Activated naive CD8-positive, alpha-beta T cell treated with anti-CD3 and anti-CD28 coated beads, Interleukin-2, amount 10 ng/mL, durations not matched to agents 7 days and 5 days (primary cell): ENCODE measurements at regions of chr19 and their contacts with region 1.

Region 1: DNA sequence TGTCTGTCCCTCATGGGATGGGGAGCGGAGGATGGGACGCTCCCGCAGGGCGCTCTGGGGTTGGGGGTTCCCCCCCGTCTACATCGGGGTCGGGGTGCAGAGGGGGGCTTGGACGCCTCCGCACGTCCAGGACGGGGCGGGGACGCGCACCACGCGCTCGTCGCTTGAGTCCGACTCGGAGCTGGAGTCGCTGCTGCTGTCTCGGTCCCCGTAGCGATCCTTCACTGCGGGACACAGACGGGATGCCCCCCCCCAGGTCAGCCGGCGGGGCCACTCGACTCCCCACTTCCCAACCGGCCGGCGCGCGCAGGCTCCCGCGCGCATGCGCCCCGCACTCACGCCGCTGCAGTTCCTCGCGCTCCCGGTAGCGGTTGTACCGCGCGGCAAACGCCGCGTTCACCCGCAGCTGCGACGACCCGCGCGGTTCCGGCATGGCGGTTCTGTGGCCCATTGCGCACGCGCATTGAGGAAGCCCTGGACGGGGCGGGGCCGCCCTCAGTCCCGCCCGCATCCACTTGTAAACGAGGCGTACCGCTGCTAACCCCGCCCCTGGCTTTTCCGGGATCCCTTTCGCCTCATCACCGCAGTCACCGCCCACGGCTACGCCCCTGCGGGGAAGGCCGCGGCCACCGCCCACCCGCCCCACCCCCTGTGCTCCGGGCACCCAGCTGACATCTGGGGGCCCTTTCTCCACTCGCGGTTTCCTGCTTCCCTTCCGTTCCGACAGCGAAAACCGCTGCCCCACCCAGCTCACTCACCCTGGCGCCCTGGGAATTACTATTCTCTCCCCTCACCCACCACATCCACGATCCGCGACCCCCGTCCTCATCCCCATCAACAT is at the start of gene KRI1:
- DNase-seq: peak; percentile 100
- ATAC-seq: peak; percentile 32
- H3K4me3 Mint-ChIP-seq: peak within 1 kb of the TSS; percentile 99
- H3K27ac Mint-ChIP-seq: peak within 1 kb of the TSS; percentile 98
- H3K4me1 Mint-ChIP-seq: peaks cover 33% of the 10 kb centered on the region
- H3K27me3 Mint-ChIP-seq: no peaks in the 10 kb centered on the region
- total RNA-seq, gene KRI1: 76.2 to 85.4 TPM

Region 2: GRCh38 chr19:10403137-10404021 is 162.4 kb before region 1 on chr19 and contains the start of gene CDC37:
- POLR2A ChIA-PET with region 1: interaction called, 11 read pairs
- DNase-seq: peak; percentile 99
- ATAC-seq: peak; percentile 68
- H3K4me3 Mint-ChIP-seq: peak within 1 kb of the TSS; percentile 88
- H3K27ac Mint-ChIP-seq: peak within 1 kb of the TSS; percentile 91
- H3K4me1 Mint-ChIP-seq: peaks cover 52% of the 10 kb centered on the region
- H3K27me3 Mint-ChIP-seq: no peaks in the 10 kb centered on the region
- total RNA-seq, gene CDC37: 242 to 248 TPM

Region 3: GRCh38 chr19:10439588-10439987 is 126.2 kb before region 1 on chr19:
- POLR2A ChIA-PET with region 1: no interaction called
- DNase-seq: no peak
- ATAC-seq: no peak
- H3K4me3 Mint-ChIP-seq: no peak overlapping the region
- H3K27ac Mint-ChIP-seq: no peak overlapping the region
- H3K4me1 Mint-ChIP-seq: peaks cover 14% of the 10 kb centered on the region
- H3K27me3 Mint-ChIP-seq: no peaks in the 10 kb centered on the region

Region 4: GRCh38 chr19:10543420-10544241 is 22.2 kb before region 1 on chr19 and contains the start of gene ATG4D:
- POLR2A ChIA-PET with region 1: interaction called, 49 read pairs
- DNase-seq: peak; percentile 89
- ATAC-seq: peak; percentile 80
- H3K4me3 Mint-ChIP-seq: peak within 1 kb of the TSS; percentile 92
- H3K27ac Mint-ChIP-seq: peak within 1 kb of the TSS; percentile 89
- H3K4me1 Mint-ChIP-seq: peaks cover 12% of the 10 kb centered on the region
- H3K27me3 Mint-ChIP-seq: peaks cover 22% of the 10 kb centered on the region
- total RNA-seq, gene ATG4D: 50.4 to 66.6 TPM

Region 5: DNA sequence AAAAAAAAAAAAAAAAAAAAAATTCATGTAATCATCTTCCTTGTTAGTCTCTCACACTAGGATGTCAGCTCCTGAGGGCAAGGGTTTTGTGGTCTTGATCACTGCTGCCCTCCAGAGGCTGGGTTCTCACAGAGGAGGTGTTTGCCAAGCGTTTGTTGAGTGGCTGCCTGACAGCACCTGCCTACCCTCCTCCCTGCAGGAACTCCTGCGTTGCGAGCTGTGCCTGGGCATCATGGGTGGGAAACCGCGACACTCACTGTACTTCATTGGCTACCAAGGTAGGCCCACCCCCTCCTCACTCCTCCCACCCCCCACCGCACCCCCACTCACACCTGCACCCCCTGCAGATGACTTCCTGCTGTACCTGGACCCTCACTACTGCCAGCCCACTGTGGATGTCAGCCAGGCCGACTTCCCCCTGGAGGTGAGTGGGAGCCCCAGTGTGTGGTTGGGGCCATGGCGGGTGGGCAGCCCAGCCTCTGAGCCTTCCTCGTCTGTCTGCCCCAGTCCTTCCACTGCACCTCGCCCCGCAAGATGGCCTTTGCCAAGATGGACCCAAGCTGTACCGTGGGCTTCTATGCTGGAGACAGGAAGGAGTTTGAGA is 14.0 kb before region 1 on chr19:
- POLR2A ChIA-PET with region 1: interaction called, 224 read pairs
- DNase-seq: no peak
- ATAC-seq: no peak
- H3K4me3 Mint-ChIP-seq: peak overlapping the region; percentile 47
- H3K27ac Mint-ChIP-seq: peak overlapping the region; percentile 92
- H3K4me1 Mint-ChIP-seq: peaks cover 44% of the 10 kb centered on the region
- H3K27me3 Mint-ChIP-seq: no peaks in the 10 kb centered on the region

Region 6: GRCh38 chr19:10602330-10603083 is 36.7 kb after region 1 on chr19:
- POLR2A ChIA-PET with region 1: interaction called, 15 read pairs
- DNase-seq: peak; percentile 94
- ATAC-seq: peak; percentile 69
- H3K4me3 Mint-ChIP-seq: peak overlapping the region; percentile 99
- H3K27ac Mint-ChIP-seq: peak overlapping the region; percentile 100
- H3K4me1 Mint-ChIP-seq: peaks cover 23% of the 10 kb centered on the region
- H3K27me3 Mint-ChIP-seq: peaks cover 4% of the 10 kb centered on the region